Tibial artery (tissue), 4 donors: ENCODE measurements at regions of chr6 and their contacts with region 1.

Region 1: DNA sequence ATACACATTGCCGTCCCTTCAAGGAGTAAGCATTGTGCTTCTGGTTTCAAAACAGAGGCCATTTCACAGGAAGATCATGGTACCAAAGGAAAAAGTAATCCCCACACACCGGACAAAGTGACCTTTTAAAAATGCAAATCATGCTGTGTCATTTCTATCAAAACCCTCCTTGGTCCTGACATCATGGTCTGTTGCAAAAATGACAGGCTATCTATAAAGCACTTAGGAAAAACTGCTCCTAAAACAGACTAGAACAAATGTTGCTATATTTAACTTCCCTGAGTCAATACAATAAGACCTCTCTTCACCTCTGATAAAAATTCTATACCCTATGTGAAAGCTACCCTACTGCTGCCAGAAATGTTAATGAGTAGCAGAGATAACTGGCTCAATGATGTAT is 353.6 kb upstream of the RUNX2 start:
- DNase-seq: no peak
- H3K4me3 ChIP-seq: no peak overlapping the region
- H3K27ac ChIP-seq: no peak overlapping the region
- H3K4me1 ChIP-seq: peaks cover 0 to 5% (median 0%) of the 10 kb centered on the region in 4 donors
- H3K27me3 ChIP-seq: no peaks in the 10 kb centered on the region
- CTCF ChIP-seq: no peak

Region 2: DNA sequence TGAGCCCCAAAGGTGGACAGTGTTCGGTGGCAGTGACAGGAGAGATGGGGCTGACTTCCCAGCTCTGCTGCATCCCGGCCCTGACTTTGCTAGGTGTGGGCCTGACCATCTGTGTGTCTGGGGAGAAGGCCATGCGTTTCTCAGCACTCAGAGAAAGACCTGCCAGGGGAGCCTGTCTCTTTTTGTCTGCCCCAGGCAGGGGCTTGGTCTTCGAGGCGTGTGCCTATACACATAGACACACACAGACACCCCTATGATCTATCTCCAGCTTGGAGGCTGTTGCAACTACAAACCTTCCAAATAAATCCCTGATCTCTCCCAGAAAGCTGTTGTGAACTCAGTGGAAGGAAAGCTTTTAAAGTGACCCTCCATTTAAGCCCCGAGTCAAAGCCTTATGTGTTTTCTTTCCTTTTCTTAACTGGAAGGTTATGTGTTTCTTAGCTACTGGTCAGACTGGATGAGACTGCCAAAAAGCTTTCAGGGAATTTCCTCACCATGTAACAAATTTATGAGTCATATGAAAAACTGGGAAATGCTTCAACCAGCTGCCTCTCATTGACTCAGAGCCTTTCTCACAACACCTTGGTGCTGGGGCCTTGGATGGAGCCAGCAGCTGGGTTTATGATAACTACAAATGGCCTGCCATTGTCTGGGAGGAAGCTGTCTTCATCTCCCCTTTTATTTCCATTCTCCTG is 484.5 kb before region 1 on chr6:
- intact Hi-C with region 1: no loop called
- DNase-seq: peak in 1 of 2 donors; percentile 53
- H3K4me3 ChIP-seq: peak overlapping the region in 1 of 2 donors; percentile 17
- H3K27ac ChIP-seq: peak overlapping the region; percentile 53 to 71
- H3K4me1 ChIP-seq: peaks cover 0 to 13% (median 9%) of the 10 kb centered on the region in 4 donors
- H3K27me3 ChIP-seq: peaks cover 0 to 27% of the 10 kb centered on the region in 2 donors
- CTCF ChIP-seq: no peak

Region 3: DNA sequence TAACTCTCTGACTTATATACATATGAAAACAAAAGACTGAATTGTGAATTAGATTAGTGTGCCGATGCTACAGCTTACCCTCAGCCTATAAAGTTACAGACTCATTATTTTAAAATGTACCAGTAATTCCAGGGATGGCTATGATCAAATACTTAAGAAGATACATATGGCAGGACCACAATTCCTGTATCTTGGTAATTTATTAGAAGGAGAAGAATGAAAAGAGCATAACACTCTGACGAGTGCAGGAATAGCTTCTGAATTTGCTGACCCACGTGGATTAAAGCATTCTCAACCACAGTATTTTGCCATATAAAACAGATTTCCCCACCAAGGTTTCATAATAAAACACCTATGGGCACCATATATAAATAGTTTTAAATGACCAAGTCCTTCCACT is 14.9 kb before region 1 on chr6:
- intact Hi-C with region 1: loop called (anchors 2 kb)
- DNase-seq: no peak
- H3K4me3 ChIP-seq: no peak overlapping the region
- H3K27ac ChIP-seq: no peak overlapping the region
- H3K4me1 ChIP-seq: no peaks in the 10 kb centered on the region
- H3K27me3 ChIP-seq: no peaks in the 10 kb centered on the region
- CTCF ChIP-seq: no peak